OCI-LY7 (cell line): ENCODE measurements at regions of chr1 and their contacts with region 1.

Region 1: GRCh38 chr1:29230553-29231378 is at the start of gene MECR:
- DNase-seq: peak; percentile 94
- H3K4me3 ChIP-seq: peak within 1 kb of the TSS; percentile 97
- H3K27ac ChIP-seq: no peak within 1 kb of the TSS
- H3K4me1 ChIP-seq: peaks cover 18% of the 10 kb centered on the region
- CTCF ChIP-seq: peak; percentile 64
- total RNA-seq, gene MECR: 27.2 and 33.5 TPM in 2 replicates

Region 2: DNA sequence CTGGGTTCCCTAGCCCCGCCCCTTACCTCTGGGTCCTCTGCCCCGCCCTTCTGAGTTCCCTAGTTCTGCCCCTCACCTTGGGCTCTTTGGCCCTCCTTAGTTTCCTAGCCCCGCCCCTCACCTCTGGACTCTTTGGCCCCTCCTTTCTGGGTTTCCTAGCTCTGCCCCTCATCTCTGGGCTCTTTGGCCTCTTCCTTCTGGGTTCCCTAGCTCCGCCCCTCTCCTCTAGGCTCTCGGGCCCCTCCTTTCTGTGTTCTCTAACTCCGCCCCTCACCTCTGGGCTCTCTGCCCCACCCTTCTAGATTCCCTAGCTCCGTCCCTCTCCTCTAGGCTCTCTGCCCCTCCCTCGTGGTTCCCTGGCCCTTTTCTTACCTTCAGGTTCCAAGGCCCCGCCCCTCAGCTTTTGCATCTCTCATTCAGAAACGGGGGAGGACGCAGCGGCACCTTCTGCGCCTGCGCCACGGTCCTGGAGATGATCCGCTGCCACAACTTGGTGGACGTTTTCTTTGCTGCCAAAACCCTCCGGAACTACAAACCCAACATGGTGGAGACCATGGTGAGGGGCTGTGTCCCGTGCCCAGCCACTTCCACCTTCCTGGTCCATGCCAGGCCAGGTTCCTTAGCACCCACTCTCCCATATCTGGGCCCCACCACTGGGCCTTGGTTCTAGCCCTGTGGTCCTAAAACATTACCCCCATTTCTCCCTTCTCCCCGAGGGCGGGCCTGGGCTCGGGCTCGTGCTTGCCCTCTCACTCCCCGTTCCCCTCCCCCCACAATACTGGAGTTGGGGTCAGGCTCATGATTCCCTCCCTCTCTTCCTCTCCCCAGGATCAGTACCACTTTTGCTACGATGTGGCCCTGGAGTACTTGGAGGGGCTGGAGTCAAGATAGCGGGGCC is 94.3 kb after region 1 on chr1:
- CTCF ChIA-PET with region 1: no interaction called
- POLR2A ChIA-PET with region 1: no interaction called
- intact Hi-C with region 1: loop called (anchors 10 kb)
- DNase-seq: no peak
- H3K4me3 ChIP-seq: no peak overlapping the region
- H3K27ac ChIP-seq: no peak overlapping the region
- H3K4me1 ChIP-seq: no peaks in the 10 kb centered on the region
- CTCF ChIP-seq: no peak